Activated T-helper 1 cell treated with anti-CD3 and anti-CD28 coated beads, Interleukin-12 subunit alpha, Interleukin-12 subunit beta, Interleukin-2, Interleukin-4 antibody, amounts not matched to agents 30 ng/mL and 10 ng/mL and 1 ng/mL, durations not matched to agents 14 hours and 24 hours and 36 hours (primary cell): ENCODE measurements at regions of chr17 and their contacts with region 1.

Region 1: GRCh38 chr17:8156246-8156992 is 4.2 kb upstream of the PER1 start:
- DNase-seq: peak; percentile 100
- H3K4me3 Mint-ChIP-seq: no peak overlapping the region
- H3K27ac Mint-ChIP-seq: no peak overlapping the region
- H3K4me1 Mint-ChIP-seq: peaks cover 56% of the 10 kb centered on the region
- H3K27me3 Mint-ChIP-seq: no peaks in the 10 kb centered on the region

Region 2: DNA sequence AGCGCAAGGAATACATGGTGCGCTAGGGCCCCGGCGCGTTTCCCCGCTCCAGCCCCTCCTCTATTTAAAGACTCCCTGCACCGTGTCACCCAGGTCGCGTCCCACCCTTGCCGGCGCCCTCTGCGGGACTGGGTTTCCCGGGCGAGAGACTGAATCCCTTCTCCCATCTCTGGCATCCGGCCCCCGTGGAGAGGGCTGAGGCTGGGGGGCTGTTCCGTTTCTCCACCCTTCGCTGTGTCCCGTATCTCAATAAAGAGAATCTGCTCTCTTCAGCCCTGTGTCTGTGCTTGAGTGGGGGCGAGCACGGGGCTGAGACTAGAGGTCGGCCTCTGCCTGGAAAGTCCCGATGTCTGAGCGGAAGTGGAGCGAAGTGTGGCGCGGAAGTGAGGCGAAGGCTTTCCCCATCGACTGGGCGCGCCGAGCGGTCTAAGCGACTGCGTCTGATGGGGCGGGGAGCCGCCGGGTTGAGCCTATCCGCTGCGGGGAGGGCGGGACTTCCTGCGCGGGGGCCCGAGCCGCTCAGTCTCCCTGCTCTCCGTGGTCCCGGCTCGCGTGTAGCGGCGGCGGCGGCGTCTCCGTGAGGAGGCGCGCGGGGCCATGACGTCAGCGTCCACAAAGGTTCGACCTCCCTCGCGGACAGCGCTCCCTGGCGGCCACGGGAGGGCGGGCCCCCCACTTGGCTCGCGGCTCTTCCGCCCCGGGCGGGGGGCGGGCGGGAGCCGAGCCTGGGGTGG is 1142.0 kb before region 1 on chr17:
- intact Hi-C with region 1: loop called (anchors 10 kb)
- DNase-seq: peak; percentile 98
- H3K4me3 Mint-ChIP-seq: peak overlapping the region; percentile 99
- H3K27ac Mint-ChIP-seq: peak overlapping the region; percentile 99
- H3K4me1 Mint-ChIP-seq: peaks cover 68% of the 10 kb centered on the region
- H3K27me3 Mint-ChIP-seq: peaks cover 6% of the 10 kb centered on the region

Region 3: GRCh38 chr17:7844292-7845154 is 311.9 kb before region 1 on chr17:
- intact Hi-C with region 1: loop called (anchors 1 kb)
- DNase-seq: peak; percentile 87
- H3K4me3 Mint-ChIP-seq: peak overlapping the region; percentile 89
- H3K27ac Mint-ChIP-seq: peak overlapping the region; percentile 96
- H3K4me1 Mint-ChIP-seq: peaks cover 37% of the 10 kb centered on the region
- H3K27me3 Mint-ChIP-seq: no peaks in the 10 kb centered on the region

Region 4: GRCh38 chr17:8109661-8110464 is 46.6 kb before region 1 on chr17:
- intact Hi-C with region 1: no loop called
- DNase-seq: peak; percentile 68
- H3K4me3 Mint-ChIP-seq: no peak overlapping the region
- H3K27ac Mint-ChIP-seq: no peak overlapping the region
- H3K4me1 Mint-ChIP-seq: no peaks in the 10 kb centered on the region
- H3K27me3 Mint-ChIP-seq: peaks cover 40% of the 10 kb centered on the region

Region 5: GRCh38 chr17:8125157-8125946 is 31.1 kb before region 1 on chr17:
- intact Hi-C with region 1: loop called (anchors 1 kb)
- DNase-seq: peak; percentile 79
- H3K4me3 Mint-ChIP-seq: peak overlapping the region; percentile 91
- H3K27ac Mint-ChIP-seq: peak overlapping the region; percentile 97
- H3K4me1 Mint-ChIP-seq: peaks cover 49% of the 10 kb centered on the region
- H3K27me3 Mint-ChIP-seq: peaks cover 52% of the 10 kb centered on the region

Region 6: GRCh38 chr17:8145811-8146210 is 10.6 kb before region 1 on chr17:
- intact Hi-C with region 1: no loop called
- DNase-seq: no peak
- H3K4me3 Mint-ChIP-seq: no peak overlapping the region
- H3K27ac Mint-ChIP-seq: peak overlapping the region; percentile 22
- H3K4me1 Mint-ChIP-seq: peaks cover 8% of the 10 kb centered on the region
- H3K27me3 Mint-ChIP-seq: no peaks in the 10 kb centered on the region

Region 7: GRCh38 chr17:8173056-8173870 is 16.8 kb after region 1 on chr17:
- intact Hi-C with region 1: loop called (anchors 1 kb)
- DNase-seq: peak; percentile 76
- H3K4me3 Mint-ChIP-seq: peak overlapping the region; percentile 87
- H3K27ac Mint-ChIP-seq: peak overlapping the region; percentile 99
- H3K4me1 Mint-ChIP-seq: peaks cover 45% of the 10 kb centered on the region
- H3K27me3 Mint-ChIP-seq: peaks cover 2% of the 10 kb centered on the region

Region 8: DNA sequence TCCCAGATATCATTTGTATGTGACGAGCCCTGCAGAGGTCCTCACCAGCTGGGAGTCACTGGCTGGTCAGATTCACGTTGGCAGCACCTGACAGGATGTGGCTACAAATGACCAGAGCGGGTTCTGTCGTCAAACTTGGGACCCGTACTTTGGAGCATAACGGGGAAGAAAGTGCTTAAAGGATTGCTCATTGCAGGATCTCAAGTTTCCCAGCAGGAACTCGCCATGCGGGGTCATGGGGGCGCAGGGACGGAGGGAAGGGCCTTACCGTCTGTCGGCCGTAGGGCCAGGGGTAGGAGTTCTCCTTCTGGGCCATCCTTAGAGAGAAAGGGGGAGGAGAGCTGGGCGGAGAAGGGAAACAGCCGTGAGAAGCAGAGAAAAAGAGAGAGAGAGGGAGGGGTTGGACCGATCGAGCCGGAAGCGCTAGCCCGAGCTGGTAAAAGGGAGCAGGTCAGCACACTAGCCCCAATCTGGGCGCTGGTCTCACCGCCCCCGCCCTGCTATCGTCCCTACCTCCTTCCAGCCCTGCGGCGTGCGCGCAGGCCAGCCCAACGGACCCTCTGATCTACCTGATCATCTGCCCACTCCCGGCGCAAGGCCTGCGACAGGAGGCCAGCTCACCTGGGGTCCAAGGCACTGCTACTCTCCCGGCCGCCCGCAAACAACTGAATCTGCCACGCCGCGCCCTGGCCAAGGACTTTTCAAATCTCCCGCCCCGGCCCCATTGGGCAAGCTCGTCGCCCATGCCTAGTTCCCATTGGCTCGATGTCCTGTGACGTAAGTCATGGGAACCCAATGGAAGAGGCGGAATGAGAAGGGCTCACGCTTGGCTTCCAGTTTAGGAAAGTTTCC is 53.7 kb after region 1 on chr17 and contains the start of gene AURKB:
- intact Hi-C with region 1: no loop called
- DNase-seq: peak; percentile 91
- H3K4me3 Mint-ChIP-seq: peak within 1 kb of the TSS; percentile 96
- H3K27ac Mint-ChIP-seq: peak within 1 kb of the TSS; percentile 94
- H3K4me1 Mint-ChIP-seq: peaks cover 34% of the 10 kb centered on the region
- H3K27me3 Mint-ChIP-seq: no peaks in the 10 kb centered on the region
- total RNA-seq, gene AURKB: 82.2 and 88.7 TPM in 2 replicates